Dendritic cell treated with granulocyte-macrophage colony-stimulating factor and Interleukin-4, amounts not matched to agents 40 ng/mL and 50 ng/mL, for 4 days (primary cell): ENCODE measurements at regions of chr2 and their contacts with region 1.

Region 1: DNA sequence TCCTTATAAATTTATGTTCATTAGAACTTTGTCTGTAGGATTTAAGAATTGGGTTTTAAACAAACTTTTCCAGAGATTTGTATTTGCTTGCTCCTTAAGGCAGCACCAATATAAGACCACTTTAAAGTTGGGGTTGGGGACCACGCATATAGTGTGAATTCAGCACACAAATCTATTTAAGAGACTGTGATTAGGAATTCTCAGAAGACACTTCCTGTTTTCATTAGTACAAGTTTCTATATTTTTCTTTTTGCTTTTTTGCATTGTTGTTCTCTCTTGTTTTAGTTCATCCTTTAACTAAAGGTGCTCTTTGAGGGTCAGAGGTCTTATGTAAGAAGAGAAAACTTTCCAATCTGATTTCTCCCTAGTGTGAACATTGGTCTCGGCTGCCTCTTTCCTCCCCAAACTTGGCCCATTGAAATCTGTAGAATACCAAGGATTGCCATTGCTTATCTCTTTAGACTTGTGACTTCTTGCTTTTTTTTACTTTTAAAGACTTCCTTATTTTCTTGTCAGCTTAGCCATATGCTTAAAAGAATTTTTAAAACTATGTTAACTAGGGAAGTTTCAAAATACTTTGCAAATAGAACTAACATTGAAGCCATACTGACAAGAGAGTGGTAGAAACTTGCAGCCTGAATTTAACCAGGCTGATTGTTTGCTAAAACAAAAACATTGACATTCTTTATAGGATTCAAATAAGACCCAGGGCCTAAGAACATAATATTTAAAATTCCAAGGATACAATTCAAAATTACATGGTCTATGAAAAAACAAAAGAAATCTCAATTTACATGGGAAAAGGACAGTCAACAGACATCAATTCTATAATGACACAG is 264.1 kb upstream of the FN1 start:
- H3K4me3 Mint-ChIP-seq: no peak overlapping the region
- H3K27ac Mint-ChIP-seq: peak overlapping the region; percentile 84
- H3K4me1 Mint-ChIP-seq: peaks cover 59% of the 10 kb centered on the region
- H3K27me3 Mint-ChIP-seq: peaks cover 2% of the 10 kb centered on the region

Region 2: GRCh38 chr2:215687149-215688031 is 12.5 kb before region 1 on chr2:
- intact Hi-C with region 1: loop called (anchors 2 kb)
- H3K4me3 Mint-ChIP-seq: no peak overlapping the region
- H3K27ac Mint-ChIP-seq: peak overlapping the region; percentile 56
- H3K4me1 Mint-ChIP-seq: peaks cover 45% of the 10 kb centered on the region
- H3K27me3 Mint-ChIP-seq: peaks cover 29% of the 10 kb centered on the region

Region 3: DNA sequence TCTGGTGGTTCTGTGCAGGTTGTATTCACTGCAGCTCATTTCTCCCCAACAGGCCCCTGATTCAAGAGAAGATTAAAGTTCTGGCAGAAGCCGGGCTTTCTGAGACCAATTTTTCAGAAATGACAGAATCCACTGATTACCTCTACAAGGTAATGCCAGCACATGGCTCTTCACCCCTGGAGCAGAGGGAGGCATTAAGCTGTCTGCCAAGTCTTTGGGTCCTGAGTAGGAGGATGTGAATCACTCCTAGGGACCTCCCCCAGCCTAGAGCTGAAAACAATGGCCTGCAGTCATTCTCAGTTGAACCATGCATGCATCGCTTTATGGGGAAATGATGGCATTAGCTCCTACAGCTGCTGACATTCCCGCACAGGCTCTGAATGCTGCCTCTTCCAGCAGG is 778.2 kb after region 1 on chr2:
- intact Hi-C with region 1: no loop called
- H3K4me3 Mint-ChIP-seq: no peak overlapping the region
- H3K27ac Mint-ChIP-seq: no peak overlapping the region
- H3K4me1 Mint-ChIP-seq: peaks cover 63% of the 10 kb centered on the region
- H3K27me3 Mint-ChIP-seq: no peaks in the 10 kb centered on the region